ENCODE measurements at regions of chr5 and their contacts with region 1.

Region 1: DNA sequence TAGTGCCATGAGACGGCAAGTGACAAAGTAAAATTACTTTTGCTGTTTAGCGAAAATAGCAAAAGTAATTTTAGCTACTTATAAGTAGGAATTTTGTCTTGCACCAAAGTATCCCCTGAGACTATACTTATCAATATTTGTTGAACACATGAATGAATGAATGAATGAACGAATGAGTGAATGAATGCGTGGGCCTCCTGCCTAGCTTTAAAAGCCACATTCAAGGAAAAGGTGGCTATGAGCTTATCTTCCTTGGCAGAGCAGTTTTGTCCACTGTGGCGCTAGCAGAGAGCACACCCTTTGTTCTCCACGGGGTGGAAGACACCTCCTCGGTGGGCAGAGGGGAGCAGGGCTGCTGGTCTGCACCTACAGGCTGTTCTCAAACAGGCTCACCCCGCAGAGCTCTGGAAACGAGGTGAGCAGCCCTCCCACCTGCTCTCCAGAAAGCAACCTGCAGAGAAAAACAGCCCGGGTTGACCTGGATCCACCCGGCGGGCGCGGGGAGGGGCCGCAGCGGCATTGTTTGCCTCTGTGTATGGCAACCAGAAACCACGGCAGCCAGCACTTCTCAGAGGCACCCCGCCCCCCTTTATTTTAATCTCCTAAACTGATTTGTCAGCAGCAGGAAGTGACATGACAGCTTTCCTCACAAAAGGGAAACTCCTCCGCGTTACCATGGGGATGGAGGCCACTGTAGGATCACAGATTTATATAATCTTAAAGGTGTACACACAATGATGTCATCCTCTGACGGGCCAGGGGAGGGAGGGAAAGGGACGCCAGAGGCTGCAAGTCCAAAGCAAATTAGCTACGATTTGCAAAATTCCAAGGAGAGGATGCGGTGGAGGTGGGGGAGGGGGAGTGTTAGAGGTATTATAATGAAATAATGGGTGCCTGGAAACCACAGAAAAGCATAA is 5.9 kb downstream of the DUSP1 start:
- DNase-seq: peak; percentile 98 to 100 (median 99)
- H3K4me3 ChIP-seq: peak overlapping the region in 1 of 2 donors; percentile 52
- H3K4me3 Mint-ChIP-seq: peak overlapping the region; percentile 77 to 90 (median 84)
- H3K27ac ChIP-seq: peak overlapping the region; percentile 100
- H3K27ac Mint-ChIP-seq: peak overlapping the region; percentile 95 to 100 (median 99)
- H3K4me1 ChIP-seq: peaks cover 55% of the 10 kb centered on the region
- H3K4me1 Mint-ChIP-seq: peaks cover 46 to 70% (median 58%) of the 10 kb centered on the region in 4 donors
- H3K27me3 ChIP-seq: no peaks in the 10 kb centered on the region
- H3K27me3 Mint-ChIP-seq: peaks cover 0 to 1% of the 10 kb centered on the region in 2 donors

Region 2: GRCh38 chr5:172646716-172647285 is 118.3 kb before region 1 on chr5:
- CTCF ChIA-PET with region 1: no interaction called
- POLR2A ChIA-PET with region 1: no interaction called
- intact Hi-C with region 1: no loop called
- DNase-seq: no peak
- H3K4me3 ChIP-seq: no peak overlapping the region
- H3K4me3 Mint-ChIP-seq: no peak overlapping the region
- H3K27ac ChIP-seq: no peak overlapping the region
- H3K27ac Mint-ChIP-seq: no peak overlapping the region
- H3K4me1 ChIP-seq: no peaks in the 10 kb centered on the region
- H3K4me1 Mint-ChIP-seq: no peaks in the 10 kb centered on the region
- H3K27me3 ChIP-seq: peaks cover 3% of the 10 kb centered on the region
- H3K27me3 Mint-ChIP-seq: peaks cover 16 to 17% of the 10 kb centered on the region in 2 donors

Region 3: DNA sequence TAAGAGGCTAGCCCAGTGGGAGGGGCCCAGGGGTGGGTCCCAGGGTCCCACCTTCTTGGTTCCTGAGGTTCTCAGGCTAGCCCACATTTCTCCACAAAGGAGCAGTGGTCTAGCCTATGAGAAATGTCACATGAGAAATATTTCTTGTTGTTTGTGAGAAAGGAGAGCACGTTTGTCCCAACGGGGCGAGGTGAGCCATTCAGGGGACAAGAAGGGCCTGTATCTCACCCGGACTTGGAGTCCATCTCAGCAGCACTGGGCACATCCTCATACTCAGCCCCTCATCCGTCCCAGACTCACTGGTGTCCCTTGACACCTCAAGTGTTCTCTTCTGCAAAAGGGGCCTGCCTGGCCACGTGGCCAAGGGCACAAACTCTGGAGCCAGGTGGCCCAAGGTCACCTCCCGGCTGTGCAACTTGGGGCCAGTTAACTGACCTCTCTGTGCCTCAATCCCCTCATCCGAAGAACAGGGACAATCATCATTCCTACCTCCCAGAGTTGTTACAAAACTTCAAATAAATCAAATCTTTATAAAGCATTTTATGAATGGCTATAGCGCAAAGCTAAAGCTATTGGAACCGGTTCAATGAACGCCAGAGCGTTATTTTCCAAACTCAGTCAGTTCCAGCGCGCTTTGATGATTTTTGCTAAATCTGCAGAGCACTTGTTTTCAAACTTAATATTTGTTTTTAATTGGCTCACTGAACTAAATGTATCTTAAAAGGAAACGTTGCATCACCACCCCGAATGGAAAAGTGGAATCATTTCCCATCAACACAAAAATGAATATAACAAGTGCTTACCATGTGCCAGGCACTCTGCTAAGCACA is 43.6 kb before region 1 on chr5:
- CTCF ChIA-PET with region 1: interaction called, 44 read pairs
- POLR2A ChIA-PET with region 1: interaction called, 97 read pairs
- intact Hi-C with region 1: loop called (anchors 1 kb)
- DNase-seq: no peak
- H3K4me3 ChIP-seq: no peak overlapping the region
- H3K4me3 Mint-ChIP-seq: peak overlapping the region in 4 of 8 donors; percentile 35 to 69 (median 54)
- H3K27ac ChIP-seq: no peak overlapping the region
- H3K27ac Mint-ChIP-seq: peak overlapping the region in 5 of 7 donors; percentile 5 to 95 (median 62)
- H3K4me1 ChIP-seq: peaks cover 24% of the 10 kb centered on the region
- H3K4me1 Mint-ChIP-seq: peaks cover 15 to 34% (median 22%) of the 10 kb centered on the region in 4 donors
- H3K27me3 ChIP-seq: no peaks in the 10 kb centered on the region
- H3K27me3 Mint-ChIP-seq: no peaks in the 10 kb centered on the region

Region 4: GRCh38 chr5:172777881-172778814 is 13.0 kb after region 1 on chr5:
- CTCF ChIA-PET with region 1: interaction called, 24 read pairs
- POLR2A ChIA-PET with region 1: interaction called, 85 read pairs
- intact Hi-C with region 1: no loop called
- DNase-seq: no peak
- H3K4me3 ChIP-seq: peak overlapping the region; percentile 1 to 7
- H3K4me3 Mint-ChIP-seq: peak overlapping the region; percentile 11 to 87 (median 78)
- H3K27ac ChIP-seq: peak overlapping the region; percentile 89
- H3K27ac Mint-ChIP-seq: peak overlapping the region; percentile 95 to 99 (median 98)
- H3K4me1 ChIP-seq: peaks cover 42% of the 10 kb centered on the region
- H3K4me1 Mint-ChIP-seq: peaks cover 29 to 51% (median 41%) of the 10 kb centered on the region in 4 donors
- H3K27me3 ChIP-seq: no peaks in the 10 kb centered on the region
- H3K27me3 Mint-ChIP-seq: no peaks in the 10 kb centered on the region

Region 5: GRCh38 chr5:172833686-172834414 is 68.7 kb after region 1 on chr5 and contains the start of gene ERGIC1:
- CTCF ChIA-PET with region 1: interaction called, 22 read pairs
- POLR2A ChIA-PET with region 1: interaction called, 114 read pairs
- intact Hi-C with region 1: no loop called
- DNase-seq: peak; percentile 59 to 73 (median 63)
- H3K4me3 ChIP-seq: peak within 1 kb of the TSS; percentile 63 to 69
- H3K4me3 Mint-ChIP-seq: peak within 1 kb of the TSS; percentile 90 to 96 (median 92)
- H3K27ac ChIP-seq: peak within 1 kb of the TSS; percentile 82
- H3K27ac Mint-ChIP-seq: peak within 1 kb of the TSS; percentile 89 to 97 (median 93)
- H3K4me1 ChIP-seq: peaks cover 47% of the 10 kb centered on the region
- H3K4me1 Mint-ChIP-seq: peaks cover 25 to 52% (median 36%) of the 10 kb centered on the region in 4 donors
- H3K27me3 ChIP-seq: no peaks in the 10 kb centered on the region
- H3K27me3 Mint-ChIP-seq: no peaks in the 10 kb centered on the region
- total RNA-seq, gene ERGIC1: 45.8 to 51.0 TPM

Region 6: DNA sequence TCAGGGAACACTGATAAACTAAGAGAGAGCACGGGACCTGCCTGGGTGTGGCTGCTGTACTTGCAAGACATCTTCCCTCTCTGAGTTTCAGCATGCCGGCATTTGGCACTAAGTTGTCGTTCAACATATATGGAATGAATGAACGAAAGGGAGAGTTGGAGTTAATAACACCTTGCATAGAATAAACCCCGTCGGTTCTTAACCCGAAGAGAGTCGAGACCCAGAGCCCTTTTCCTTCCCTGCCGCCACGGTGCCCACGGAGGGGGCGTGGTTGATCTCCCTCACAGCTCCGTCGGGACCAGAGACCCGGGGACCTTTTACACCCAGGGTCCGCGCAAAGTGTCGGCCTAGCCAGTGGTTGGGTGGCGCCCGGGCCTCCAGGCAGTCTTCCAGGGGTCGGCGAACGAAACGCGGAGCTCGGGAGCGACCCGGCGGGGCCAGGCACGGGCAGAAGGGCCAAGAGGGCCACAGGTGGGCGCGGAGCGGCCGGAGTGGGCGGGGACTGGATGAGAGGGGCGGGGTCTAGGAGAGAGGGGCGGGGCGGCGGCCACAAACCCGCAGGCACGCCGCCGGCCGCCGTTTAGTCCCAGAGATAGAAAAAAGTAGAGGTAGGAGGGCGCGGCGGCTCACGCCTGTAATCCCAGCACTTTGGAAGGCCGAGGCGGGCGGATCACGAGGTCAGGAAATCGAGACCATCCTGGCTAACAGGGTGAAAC is 193.4 kb after region 1 on chr5:
- CTCF ChIA-PET with region 1: interaction called, 9 read pairs
- POLR2A ChIA-PET with region 1: interaction called, 23 read pairs
- intact Hi-C with region 1: loop called (anchors 1 kb)
- DNase-seq: peak; percentile 62 to 70 (median 67)
- H3K4me3 ChIP-seq: peak overlapping the region in 1 of 2 donors; percentile 97
- H3K4me3 Mint-ChIP-seq: peak overlapping the region; percentile 86 to 98 (median 96)
- H3K27ac ChIP-seq: peak overlapping the region; percentile 82
- H3K27ac Mint-ChIP-seq: peak overlapping the region; percentile 92 to 99 (median 98)
- H3K4me1 ChIP-seq: peaks cover 16% of the 10 kb centered on the region
- H3K4me1 Mint-ChIP-seq: peaks cover 18 to 43% (median 27%) of the 10 kb centered on the region in 4 donors
- H3K27me3 ChIP-seq: no peaks in the 10 kb centered on the region
- H3K27me3 Mint-ChIP-seq: no peaks in the 10 kb centered on the region

Measured in CD4-positive, alpha-beta memory T cell (primary cell).